ENCODE measurements at regions of chr9 and their contacts with region 1.

Region 1: DNA sequence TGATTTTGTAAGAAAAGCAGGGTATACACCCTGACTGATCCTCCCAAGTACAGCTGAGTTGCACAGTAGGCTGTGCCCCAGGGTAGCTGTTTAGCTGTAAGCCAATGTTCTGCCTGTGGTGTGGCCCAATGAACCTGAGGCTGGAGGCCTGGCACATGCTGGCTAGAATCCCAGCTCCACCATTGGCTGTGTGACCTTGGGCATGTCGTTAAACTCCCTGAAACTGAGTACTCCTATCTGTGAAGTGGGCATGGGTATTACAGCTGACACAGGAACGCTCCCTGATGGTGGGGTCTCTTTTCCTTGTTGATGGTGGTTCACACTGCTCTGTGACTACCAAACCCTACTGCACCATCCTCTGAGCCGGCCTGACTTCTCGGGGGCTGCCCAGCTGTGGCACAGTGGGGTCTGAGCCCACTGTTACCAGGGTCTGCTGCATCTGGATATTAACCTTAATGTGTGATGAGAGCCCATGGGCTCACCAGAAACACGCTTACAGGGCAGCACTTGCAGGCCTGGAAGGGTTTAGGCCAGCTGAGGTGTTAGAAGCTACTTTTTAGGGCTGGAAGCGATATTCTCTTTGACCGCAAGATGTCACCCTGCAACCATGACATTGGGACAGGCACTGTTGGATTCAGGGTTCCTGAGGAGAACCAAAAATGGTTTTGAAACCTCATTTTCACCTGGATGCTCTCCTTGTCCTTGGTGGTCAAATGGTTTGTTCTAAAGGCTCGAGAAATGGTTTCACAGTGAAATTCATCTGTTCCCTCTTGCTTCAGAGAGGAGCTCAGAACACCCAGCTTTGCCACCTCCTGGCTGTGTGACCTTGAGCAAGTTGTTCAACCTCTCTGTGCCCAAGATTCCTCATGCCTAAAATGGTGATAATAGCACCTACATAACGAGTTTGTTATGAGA is 6.8 kb upstream of the GADD45G start:
- DNase-seq: peak; percentile 69
- ATAC-seq: peak; percentile 52
- H3K4me3 Mint-ChIP-seq: no peak overlapping the region
- H3K27ac Mint-ChIP-seq: no peak overlapping the region
- H3K4me1 Mint-ChIP-seq: no peaks in the 10 kb centered on the region
- H3K27me3 Mint-ChIP-seq: peaks cover 6% of the 10 kb centered on the region

Region 2: GRCh38 chr9:89254772-89255123 is 343.2 kb before region 1 on chr9:
- CTCF ChIA-PET with region 1: no interaction called
- POLR2A ChIA-PET with region 1: no interaction called
- intact Hi-C with region 1: no loop called
- DNase-seq: no peak
- ATAC-seq: no peak
- H3K4me3 Mint-ChIP-seq: no peak overlapping the region
- H3K27ac Mint-ChIP-seq: no peak overlapping the region
- H3K4me1 Mint-ChIP-seq: no peaks in the 10 kb centered on the region
- H3K27me3 Mint-ChIP-seq: no peaks in the 10 kb centered on the region

Region 3: DNA sequence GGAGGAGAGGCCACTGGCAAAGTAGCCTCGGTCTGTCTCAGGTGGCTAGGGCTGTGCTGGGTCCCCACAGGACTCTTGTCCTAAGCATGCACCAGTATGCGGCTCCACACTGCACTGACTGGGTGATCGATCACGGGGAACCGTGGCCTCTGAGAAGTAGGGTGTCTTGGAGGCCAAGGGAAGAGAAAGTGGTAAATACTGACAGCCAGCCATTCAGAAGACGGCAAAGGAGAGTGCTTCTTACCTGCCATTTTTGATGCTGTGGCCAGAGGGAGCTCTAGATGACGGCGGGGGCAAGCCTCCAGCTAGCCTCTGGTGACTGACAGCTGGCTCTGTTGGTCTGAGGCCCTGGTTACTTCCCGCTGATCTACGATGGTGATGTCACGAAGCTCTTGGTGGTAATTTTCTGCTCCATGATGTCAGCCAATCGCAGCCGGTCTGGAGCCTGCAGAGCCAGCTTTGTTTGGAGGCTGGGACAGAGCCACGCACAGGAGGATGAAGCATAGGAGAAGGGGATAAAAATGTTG is 33.6 kb before region 1 on chr9:
- CTCF ChIA-PET with region 1: interaction called, 10 read pairs
- POLR2A ChIA-PET with region 1: no interaction called
- intact Hi-C with region 1: no loop called
- DNase-seq: peak; percentile 27
- ATAC-seq: no peak
- H3K4me3 Mint-ChIP-seq: no peak overlapping the region
- H3K27ac Mint-ChIP-seq: no peak overlapping the region
- H3K4me1 Mint-ChIP-seq: peaks cover 2% of the 10 kb centered on the region
- H3K27me3 Mint-ChIP-seq: peaks cover 3% of the 10 kb centered on the region

Region 4: DNA sequence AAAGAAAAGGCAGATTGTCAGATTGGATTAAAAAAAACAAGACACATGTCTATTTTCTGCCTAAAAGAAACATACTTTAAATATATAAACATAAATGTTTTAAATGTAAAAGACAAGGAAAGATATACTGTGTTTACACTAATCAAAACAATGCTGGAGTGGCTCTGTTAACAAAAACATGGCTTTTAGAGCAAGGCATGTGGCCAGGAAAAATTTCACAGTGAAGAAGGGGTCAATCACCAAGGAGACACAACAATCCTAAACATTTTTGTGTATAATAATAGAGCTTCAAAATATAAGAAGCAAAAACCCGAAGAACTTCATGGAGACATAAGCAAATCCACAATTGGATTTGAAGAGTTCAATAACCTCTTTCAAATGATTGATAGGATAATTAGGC is 11.7 kb before region 1 on chr9:
- CTCF ChIA-PET with region 1: interaction called, 11 read pairs
- POLR2A ChIA-PET with region 1: no interaction called
- intact Hi-C with region 1: no loop called
- DNase-seq: no peak
- ATAC-seq: no peak
- H3K4me3 Mint-ChIP-seq: no peak overlapping the region
- H3K27ac Mint-ChIP-seq: no peak overlapping the region
- H3K4me1 Mint-ChIP-seq: no peaks in the 10 kb centered on the region
- H3K27me3 Mint-ChIP-seq: peaks cover 21% of the 10 kb centered on the region

Region 5: GRCh38 chr9:89635816-89636215 is 37.8 kb after region 1 on chr9:
- CTCF ChIA-PET with region 1: no interaction called
- POLR2A ChIA-PET with region 1: no interaction called
- intact Hi-C with region 1: no loop called
- DNase-seq: no peak
- ATAC-seq: no peak
- H3K4me3 Mint-ChIP-seq: no peak overlapping the region
- H3K27ac Mint-ChIP-seq: no peak overlapping the region
- H3K4me1 Mint-ChIP-seq: peaks cover 3% of the 10 kb centered on the region
- H3K27me3 Mint-ChIP-seq: no peaks in the 10 kb centered on the region

Region 6: DNA sequence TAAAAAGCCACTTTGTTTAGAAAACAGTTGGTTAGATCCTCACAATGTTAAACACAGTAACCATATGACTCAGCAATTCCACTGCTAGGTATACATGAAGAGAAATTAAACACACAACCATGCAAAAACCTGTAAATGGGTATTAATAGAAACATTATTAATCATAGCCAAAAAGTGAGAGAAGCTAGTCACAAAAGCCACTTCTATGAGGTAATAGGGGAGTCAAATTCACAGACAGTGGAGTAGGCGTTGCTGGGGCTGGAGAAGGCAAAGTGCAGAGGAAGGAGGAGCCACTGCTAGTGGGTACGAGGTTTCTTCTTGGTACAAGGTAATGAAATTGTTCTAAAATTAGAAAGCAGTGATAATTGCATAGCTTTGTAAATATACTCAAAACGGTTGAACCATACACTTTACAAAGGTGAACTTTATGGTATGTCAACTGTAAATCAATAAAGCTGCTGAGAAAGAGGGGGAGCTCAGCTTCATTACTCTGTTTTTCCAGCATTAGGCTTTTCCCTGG is 371.2 kb after region 1 on chr9:
- CTCF ChIA-PET with region 1: no interaction called
- POLR2A ChIA-PET with region 1: no interaction called
- intact Hi-C with region 1: no loop called
- DNase-seq: peak; percentile 59
- ATAC-seq: peak; percentile 93
- H3K4me3 Mint-ChIP-seq: no peak overlapping the region
- H3K27ac Mint-ChIP-seq: no peak overlapping the region
- H3K4me1 Mint-ChIP-seq: peaks cover 29% of the 10 kb centered on the region
- H3K27me3 Mint-ChIP-seq: peaks cover 3% of the 10 kb centered on the region

Region 7: DNA sequence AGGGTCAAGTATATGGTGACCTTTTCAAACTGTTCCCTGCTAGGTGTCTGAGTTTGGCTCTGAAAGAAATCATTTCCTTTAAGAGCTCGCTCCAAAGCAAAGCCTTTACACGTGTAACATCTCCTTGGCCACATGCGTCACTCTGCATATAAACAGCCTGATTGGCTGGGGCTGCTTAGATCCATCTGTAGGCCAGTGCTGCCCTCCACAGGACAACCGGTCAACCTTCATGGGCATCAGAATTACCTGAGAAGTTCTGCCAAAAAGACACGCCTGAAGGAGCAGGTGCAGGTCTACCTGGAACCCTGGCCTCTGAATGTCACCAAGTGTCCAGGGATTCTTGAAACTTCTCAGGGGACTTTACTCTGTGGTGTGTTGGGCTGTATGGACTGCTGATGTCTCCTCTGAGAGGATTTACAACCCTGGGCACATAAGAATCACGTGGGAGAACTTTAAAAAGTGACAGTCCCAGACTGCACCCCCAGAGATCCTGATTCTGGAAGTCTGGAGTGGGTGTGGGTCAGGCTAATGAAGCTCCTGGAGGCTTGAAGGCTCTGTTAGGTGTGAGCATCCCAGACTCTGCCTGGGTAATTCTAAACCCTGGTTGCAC is 504.4 kb after region 1 on chr9:
- CTCF ChIA-PET with region 1: interaction called, 114 read pairs
- POLR2A ChIA-PET with region 1: no interaction called
- intact Hi-C with region 1: loop called (anchors 1 kb)
- DNase-seq: peak; percentile 90
- ATAC-seq: peak; percentile 100
- H3K4me3 Mint-ChIP-seq: no peak overlapping the region
- H3K27ac Mint-ChIP-seq: no peak overlapping the region
- H3K4me1 Mint-ChIP-seq: peaks cover 3% of the 10 kb centered on the region
- H3K27me3 Mint-ChIP-seq: peaks cover 2% of the 10 kb centered on the region

Region 8: DNA sequence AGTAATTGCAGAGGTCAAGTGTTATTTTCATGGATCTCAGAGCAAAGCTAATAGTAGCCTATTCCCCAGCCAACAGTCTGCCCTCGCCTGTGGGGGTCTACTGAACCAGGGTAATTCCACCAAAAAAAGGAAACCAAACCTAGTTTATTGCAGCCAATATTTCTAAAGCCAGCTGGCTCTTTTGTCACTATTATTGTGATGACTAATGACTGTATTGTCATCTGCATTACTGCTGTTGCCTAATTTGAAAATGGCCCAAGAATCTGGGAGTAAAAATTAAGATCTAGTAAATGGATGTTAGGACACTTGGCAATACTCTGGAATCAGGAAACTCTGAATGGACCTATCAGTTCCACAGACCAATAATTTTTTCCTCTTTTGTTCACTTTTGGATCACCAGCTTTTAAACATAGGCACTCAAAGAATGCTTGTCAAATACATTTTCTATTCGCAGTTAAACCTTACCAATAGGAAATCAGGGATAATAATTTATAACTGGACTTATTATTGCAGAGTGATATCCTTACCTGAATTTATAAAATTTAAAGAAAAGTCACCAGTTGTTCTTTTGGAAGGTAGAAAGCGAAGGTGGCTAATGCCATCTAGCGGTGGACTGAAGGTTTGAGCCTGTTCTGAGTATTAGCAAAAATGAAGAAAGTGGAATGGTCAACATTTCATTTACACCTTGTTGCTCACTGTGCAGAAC is 1272.8 kb after region 1 on chr9:
- CTCF ChIA-PET with region 1: interaction called, 4 read pairs
- POLR2A ChIA-PET with region 1: no interaction called
- intact Hi-C with region 1: loop called in 1 of 2 experiments (anchors 5 kb)
- DNase-seq: peak; percentile 57
- ATAC-seq: no peak
- H3K4me3 Mint-ChIP-seq: no peak overlapping the region
- H3K27ac Mint-ChIP-seq: no peak overlapping the region
- H3K4me1 Mint-ChIP-seq: no peaks in the 10 kb centered on the region
- H3K27me3 Mint-ChIP-seq: peaks cover 1% of the 10 kb centered on the region

Measured in activated CD4-positive, alpha-beta T cell treated with anti-CD3 and anti-CD28 coated beads for 36 hours (primary cell).